Heart right ventricle (tissue), 16 donors: ENCODE measurements at regions of chr1 and their contacts with region 1.

Region 1: GRCh38 chr1:100895540-100896483 is at the start of gene SLC30A7:
- DNase-seq: peak; percentile 96 to 97
- ATAC-seq: peak; percentile 95 to 97 (median 97)
- H3K4me3 ChIP-seq: peak within 1 kb of the TSS; percentile 62 to 93 (median 79)
- H3K27ac ChIP-seq: peak within 1 kb of the TSS; percentile 74 to 97 (median 95)
- H3K4me1 ChIP-seq: peaks cover 3 to 37% (median 22%) of the 10 kb centered on the region in 9 donors
- H3K27me3 ChIP-seq: no peaks in the 10 kb centered on the region
- CTCF ChIP-seq: no peak
- total RNA-seq, gene SLC30A7: 4.0 to 16.2 (median 5.8) TPM

Region 2: GRCh38 chr1:99808391-99809115 is 1087.3 kb before region 1 on chr1:
- intact Hi-C with region 1: loop called in 1 of 10 experiments (anchors 10 kb)
- DNase-seq: peak in 1 of 2 donors; percentile 54
- ATAC-seq: peak; percentile 87 to 96 (median 90)
- H3K4me3 ChIP-seq: peak overlapping the region in 4 of 10 donors; percentile 9 to 32 (median 16)
- H3K27ac ChIP-seq: peak overlapping the region in 4 of 10 donors; percentile 26 to 61 (median 45)
- H3K4me1 ChIP-seq: peaks cover 0 to 13% (median 6%) of the 10 kb centered on the region in 9 donors
- H3K27me3 ChIP-seq: peaks cover 0 to 10% (median 8%) of the 10 kb centered on the region in 7 donors
- CTCF ChIP-seq: peak; percentile 48 to 77 (median 71)

Region 3: GRCh38 chr1:99975529-99975928 is 920.3 kb before region 1 on chr1:
- intact Hi-C with region 1: no loop called
- DNase-seq: no peak
- ATAC-seq: no peak
- H3K4me3 ChIP-seq: no peak overlapping the region
- H3K27ac ChIP-seq: no peak overlapping the region
- H3K4me1 ChIP-seq: peaks cover 0 to 11% (median 6%) of the 10 kb centered on the region in 9 donors
- H3K27me3 ChIP-seq: no peaks in the 10 kb centered on the region
- CTCF ChIP-seq: no peak

Region 4: DNA sequence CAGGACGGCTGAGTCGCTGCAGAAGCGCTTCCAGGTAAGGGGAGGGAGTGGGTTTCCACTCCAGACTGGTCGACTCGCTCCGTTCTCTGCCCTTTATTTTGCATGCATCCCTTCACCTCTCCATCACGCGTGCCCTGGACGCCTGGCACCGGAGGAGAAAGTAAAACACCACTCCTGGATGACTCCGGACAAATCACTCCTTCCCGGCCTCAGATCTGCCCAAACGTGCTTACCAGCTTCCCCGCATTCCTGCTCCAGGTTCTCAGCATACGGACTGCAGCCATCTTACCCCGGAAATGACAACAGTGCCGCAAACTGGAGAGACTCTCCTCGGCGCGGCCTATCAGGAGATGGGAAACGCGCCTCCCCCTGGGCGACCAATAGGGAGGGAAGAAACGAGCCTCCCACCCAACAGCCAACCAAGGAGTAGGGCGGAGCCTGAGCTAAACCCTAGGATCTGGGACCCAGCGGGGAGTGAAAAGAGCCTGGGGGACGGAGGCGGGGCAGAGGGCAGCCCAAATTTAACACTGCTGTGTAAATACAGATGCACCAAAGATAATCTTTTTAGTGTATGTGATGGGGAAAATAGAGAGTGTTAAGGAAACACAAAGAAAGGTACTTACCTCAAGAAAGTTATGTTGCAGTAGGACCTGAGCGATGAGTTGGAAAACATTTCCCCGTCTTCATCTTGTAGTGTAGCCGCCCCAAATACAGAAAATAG is 646.1 kb before region 1 on chr1 and contains the start of gene DBT:
- intact Hi-C with region 1: loop called in 1 of 10 experiments (anchors 10 kb)
- DNase-seq: peak; percentile 90 to 96
- ATAC-seq: peak; percentile 100
- H3K4me3 ChIP-seq: peak within 1 kb of the TSS; percentile 58 to 97 (median 79)
- H3K27ac ChIP-seq: peak within 1 kb of the TSS in 9 of 10 donors; percentile 77 to 95 (median 88)
- H3K4me1 ChIP-seq: peaks cover 0 to 27% (median 19%) of the 10 kb centered on the region in 9 donors
- H3K27me3 ChIP-seq: no peaks in the 10 kb centered on the region
- CTCF ChIP-seq: no peak
- total RNA-seq, gene DBT: 27.9 to 49.0 (median 38.8) TPM